Dorsolateral prefrontal cortex (tissue), 120 donors: ENCODE measurements at regions of chr2 and their contacts with region 1.

Region 1: DNA sequence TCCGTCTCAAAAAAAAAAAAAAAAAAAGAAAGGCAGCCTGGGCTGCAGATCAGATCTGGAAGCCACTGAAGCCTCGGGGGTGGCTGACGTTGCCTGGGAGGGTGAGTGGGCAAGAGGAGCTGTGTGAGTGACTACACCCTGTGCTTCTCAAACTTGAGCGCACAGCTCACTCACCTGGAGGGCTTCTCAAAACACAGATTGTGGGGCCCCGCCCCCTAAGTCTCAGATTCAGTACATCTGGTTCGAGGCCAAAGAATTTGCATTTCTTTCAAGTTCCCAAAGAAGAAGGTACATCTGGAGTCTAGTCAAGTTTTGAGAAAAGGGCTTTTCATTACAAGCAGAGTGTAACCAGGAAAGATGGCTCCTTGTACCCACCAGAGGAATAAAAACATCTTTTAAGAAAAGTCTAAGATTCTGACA is 97.7 kb upstream of the CAB39 start:
- DNase-seq: no peak
- H3K4me3 ChIP-seq: no peak overlapping the region
- H3K27ac ChIP-seq: no peak overlapping the region
- H3K27me3 ChIP-seq: peaks cover 0 to 3% (median 0%) of the 10 kb centered on the region in 45 donors
- CTCF ChIP-seq: no peak

Region 2: GRCh38 chr2:230007931-230008707 is 606.8 kb before region 1 on chr2:
- intact Hi-C with region 1: loop called (anchors 2 to 10 kb)
- DNase-seq: peak; percentile 49 to 89 (median 74)
- H3K4me3 ChIP-seq: peak overlapping the region in 13 of 59 donors; percentile 3 to 39 (median 25)
- H3K27ac ChIP-seq: no peak overlapping the region
- H3K27me3 ChIP-seq: no peaks in the 10 kb centered on the region
- CTCF ChIP-seq: peak; percentile 72 to 90 (median 84)

Region 3: GRCh38 chr2:230068016-230068650 is 546.8 kb before region 1 on chr2:
- intact Hi-C with region 1: loop called in 1 of 2 experiments (anchors 2 kb)
- DNase-seq: peak in 9 of 10 donors; percentile 30 to 77 (median 60)
- H3K4me3 ChIP-seq: peak overlapping the region; percentile 57 to 89 (median 75)
- H3K27ac ChIP-seq: peak overlapping the region in 57 of 59 donors; percentile 64 to 94 (median 89)
- H3K27me3 ChIP-seq: no peaks in the 10 kb centered on the region
- CTCF ChIP-seq: peak in 17 of 56 donors; percentile 3 to 35 (median 17)

Region 4: DNA sequence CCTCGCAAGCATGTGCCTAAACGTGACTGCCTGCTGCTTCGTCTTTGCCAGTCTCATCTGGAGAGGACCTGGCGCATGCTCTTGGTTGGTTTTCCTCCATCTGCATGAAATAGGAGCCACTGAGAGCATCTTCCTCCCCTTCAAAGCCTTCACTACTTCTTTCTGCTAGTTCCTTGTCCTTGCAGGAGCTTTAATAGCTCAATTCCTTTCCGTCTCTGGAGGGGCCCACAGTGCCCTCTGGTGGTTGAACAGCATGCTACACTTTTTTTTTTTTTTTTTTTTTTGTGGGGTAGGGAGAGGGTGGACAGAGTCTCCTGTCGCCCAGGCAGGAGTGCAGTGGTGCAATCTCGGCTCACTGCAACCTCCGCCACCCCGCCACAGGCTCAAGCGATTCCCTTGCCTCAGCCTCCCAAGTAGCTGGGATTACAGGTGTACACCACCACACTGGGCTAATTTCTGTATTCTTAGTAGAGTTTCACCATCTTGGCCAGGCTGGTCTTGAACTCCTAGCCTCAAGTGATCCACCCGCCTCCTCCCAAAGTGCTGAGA is 454.7 kb before region 1 on chr2:
- intact Hi-C with region 1: loop called in 1 of 2 experiments (anchors 5 kb)
- DNase-seq: peak in 2 of 10 donors; percentile 12 to 14
- H3K4me3 ChIP-seq: no peak overlapping the region
- H3K27ac ChIP-seq: no peak overlapping the region
- H3K27me3 ChIP-seq: no peaks in the 10 kb centered on the region
- CTCF ChIP-seq: peak; percentile 53 to 89 (median 81)

Region 5: DNA sequence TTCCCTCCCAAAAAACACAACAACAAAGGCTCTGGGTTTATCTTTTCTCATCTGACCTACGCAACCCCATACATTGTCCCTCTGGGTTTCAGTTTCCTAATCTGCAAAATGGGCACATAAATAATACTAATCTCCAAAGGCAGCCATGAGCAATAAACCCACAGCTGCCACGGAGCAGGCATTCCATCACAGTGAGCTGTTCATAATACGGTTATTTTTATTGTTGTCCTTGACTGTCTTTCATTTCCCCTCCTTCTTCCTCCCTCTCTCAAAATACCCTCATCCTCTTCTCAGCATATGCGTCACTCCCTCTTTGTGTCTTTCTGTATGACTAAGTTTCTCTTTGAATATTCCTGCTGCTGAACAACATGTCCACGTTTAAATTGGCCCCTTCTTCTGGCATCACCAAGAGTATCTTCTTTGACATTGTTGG is 32.1 kb before region 1 on chr2:
- intact Hi-C with region 1: no loop called
- DNase-seq: no peak
- H3K4me3 ChIP-seq: no peak overlapping the region
- H3K27ac ChIP-seq: no peak overlapping the region
- H3K27me3 ChIP-seq: peaks cover 0 to 12% (median 0%) of the 10 kb centered on the region in 45 donors
- CTCF ChIP-seq: no peak